ENCODE measurements at regions of chr4 and their contacts with region 1.

Region 1: GRCh38 chr4:85747882-85748491 is 273.0 kb downstream of the ARHGAP24 start:
- DNase-seq: peak in 1 of 2 donors; percentile 88
- H3K4me3 ChIP-seq: no peak overlapping the region
- H3K27ac ChIP-seq: no peak overlapping the region
- H3K4me1 ChIP-seq: peaks cover 0 to 40% (median 3%) of the 10 kb centered on the region in 4 donors
- H3K27me3 ChIP-seq: no peaks in the 10 kb centered on the region
- CTCF ChIP-seq: peak in 5 of 7 experiments; percentile 72 to 84 (median 78)
- EP300 ChIP-seq: no peak
- POLR2A ChIP-seq: no peak

Region 2: GRCh38 chr4:85149676-85150075 is 598.3 kb before region 1 on chr4:
- intact Hi-C with region 1: loop called (anchors 10 kb)
- DNase-seq: peak in 1 of 2 donors; percentile 47
- H3K4me3 ChIP-seq: no peak overlapping the region
- H3K27ac ChIP-seq: no peak overlapping the region
- H3K4me1 ChIP-seq: peaks cover 0 to 7% (median 0%) of the 10 kb centered on the region in 4 donors
- H3K27me3 ChIP-seq: no peaks in the 10 kb centered on the region
- CTCF ChIP-seq: no peak
- EP300 ChIP-seq: no peak
- POLR2A ChIP-seq: no peak

Measured in stomach (tissue), 19 donors.